WTC11 (cell line): ENCODE measurements at regions of chr5 and their contacts with region 1.

Region 1: DNA sequence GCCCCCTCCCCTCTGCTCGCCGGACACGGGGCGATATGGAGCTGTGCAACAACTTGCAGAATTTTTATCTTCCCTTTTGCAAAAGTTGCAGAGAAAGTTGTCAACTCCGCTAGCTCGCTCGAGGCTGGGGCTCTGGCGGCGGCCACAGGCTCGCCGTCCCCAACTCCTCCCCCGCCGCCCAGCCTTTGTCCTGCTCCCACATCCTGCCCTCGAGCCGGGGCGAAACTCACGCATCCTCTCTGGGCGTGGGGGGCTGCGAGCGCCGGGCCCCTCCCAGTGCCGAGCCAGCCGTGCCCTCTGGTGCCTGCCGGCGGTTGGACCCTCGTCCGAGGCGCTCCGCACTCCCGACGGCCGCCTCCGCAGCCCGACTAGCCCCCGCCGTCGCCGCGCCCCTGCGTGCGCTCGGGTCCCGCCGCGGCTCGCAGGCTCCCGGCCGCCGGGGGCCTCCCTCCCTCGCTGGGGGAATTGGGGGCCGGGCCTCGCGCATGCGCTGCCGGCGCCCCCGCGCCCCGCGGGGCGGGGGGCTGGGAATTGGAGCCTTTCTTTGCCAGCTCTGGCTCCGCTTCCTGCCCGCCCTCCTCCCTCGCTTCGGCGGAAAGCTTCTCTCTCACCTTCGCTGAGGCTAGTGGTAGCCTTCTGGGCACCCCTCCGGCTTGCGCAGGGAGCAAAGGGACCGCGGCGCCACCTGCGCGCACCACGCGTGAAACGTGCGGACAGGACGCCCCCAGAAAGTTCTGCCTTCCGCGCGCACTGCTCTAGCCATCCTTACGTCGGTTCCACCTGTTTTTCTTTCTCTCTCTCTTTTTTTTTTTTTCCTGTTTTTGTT is at the start of gene CCNJL:
- DNase-seq: peak; percentile 88
- ATAC-seq: peak; percentile 82
- H3K4me3 Mint-ChIP-seq: peak within 1 kb of the TSS; percentile 90
- H3K27ac Mint-ChIP-seq: peak within 1 kb of the TSS; percentile 85
- H3K4me1 Mint-ChIP-seq: peaks cover 47% of the 10 kb centered on the region
- H3K27me3 Mint-ChIP-seq: no peaks in the 10 kb centered on the region; the same call in 1 of the 2 replicates
- CTCF ChIP-seq: no peak
- total RNA-seq, gene CCNJL: 27.9 to 31.3 TPM (median 28.6 TPM) in 3 replicates

Region 2: DNA sequence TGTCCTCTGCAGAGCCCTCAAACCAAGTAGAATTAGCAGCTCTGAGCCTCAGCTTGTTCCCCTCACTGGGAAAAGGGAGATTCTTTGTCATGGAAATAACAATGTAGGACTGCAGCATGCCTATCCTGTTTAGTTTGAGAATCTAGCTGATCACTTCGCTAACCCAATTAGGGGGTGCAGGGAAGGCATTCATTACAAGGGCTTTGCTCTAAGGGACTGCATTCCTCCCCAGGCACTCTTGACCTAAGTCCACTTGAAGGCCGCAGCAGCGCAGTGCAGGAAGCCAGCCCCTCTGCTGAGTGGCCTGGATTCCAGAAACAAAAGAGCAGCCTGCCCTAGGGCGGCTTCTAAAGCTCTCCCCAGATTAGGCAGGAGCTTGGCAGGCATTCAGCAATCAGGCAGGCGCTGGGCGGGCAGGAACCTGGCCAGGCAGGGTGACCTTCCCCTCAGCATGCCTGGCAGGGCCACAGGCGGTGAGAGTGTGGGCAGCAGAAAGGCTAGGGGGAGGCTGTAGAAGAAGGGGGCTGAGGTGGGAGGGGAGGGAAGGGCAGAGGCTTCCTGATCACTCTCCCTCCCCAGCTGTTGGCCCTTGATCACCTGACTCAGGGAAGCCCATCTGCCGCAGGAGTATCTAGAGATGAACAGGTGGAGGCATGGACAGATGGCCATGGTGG is 24.8 kb before region 1 on chr5:
- CTCF ChIA-PET with region 1: interaction called, 9 read pairs
- POLR2A ChIA-PET with region 1: interaction called, 18 read pairs
- DNase-seq: peak; percentile 86
- ATAC-seq: peak; percentile 92
- H3K4me3 Mint-ChIP-seq: peak overlapping the region; percentile 60
- H3K27ac Mint-ChIP-seq: peak overlapping the region; percentile 99
- H3K4me1 Mint-ChIP-seq: peaks cover 59% of the 10 kb centered on the region
- H3K27me3 Mint-ChIP-seq: no peaks in the 10 kb centered on the region
- CTCF ChIP-seq: no peak

Region 3: DNA sequence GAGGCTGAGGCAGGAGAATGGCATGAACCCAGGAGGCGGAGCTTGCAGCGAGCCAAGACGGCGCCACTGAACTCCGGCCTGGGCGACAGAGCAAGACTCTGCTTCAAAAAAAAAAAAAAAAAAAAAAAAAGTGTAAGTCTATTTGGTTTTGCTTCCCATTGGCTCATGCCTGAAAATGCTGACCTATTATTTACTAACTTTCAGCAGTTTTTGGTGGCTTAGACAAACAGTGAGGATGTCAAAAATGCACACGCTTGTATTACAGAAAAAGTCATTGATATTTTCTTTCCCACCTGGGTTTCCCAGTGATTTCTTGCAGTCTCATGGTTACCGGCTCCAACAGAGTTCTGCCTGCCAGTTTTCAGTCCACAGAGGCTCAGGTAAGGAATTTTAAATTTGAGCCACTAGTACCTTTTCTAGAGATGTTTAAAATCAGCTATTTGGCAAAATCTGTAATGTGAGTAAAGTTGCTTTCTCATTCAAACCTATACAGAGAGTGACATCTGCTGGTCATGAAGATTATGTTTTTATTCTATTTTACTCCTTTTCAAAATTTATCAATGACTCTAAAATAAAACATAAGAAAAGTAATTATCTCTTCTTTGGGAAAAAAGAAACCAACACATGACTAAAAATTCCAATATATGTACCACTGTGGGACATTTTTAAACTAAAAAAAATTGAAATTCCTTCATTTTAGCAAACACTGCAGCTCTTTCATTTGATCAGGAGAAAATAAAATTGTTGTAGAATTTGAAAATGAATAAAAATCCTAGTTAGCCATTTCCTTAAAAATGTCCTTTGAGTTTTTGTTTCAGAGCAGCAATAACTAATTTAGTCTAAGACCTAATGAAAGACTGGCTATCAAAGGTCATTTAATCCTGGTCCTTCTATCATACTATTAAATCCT is 78.7 kb after region 1 on chr5:
- CTCF ChIA-PET with region 1: no interaction called
- POLR2A ChIA-PET with region 1: no interaction called
- DNase-seq: no peak
- ATAC-seq: no peak
- H3K4me3 Mint-ChIP-seq: no peak overlapping the region
- H3K27ac Mint-ChIP-seq: 0 out of 2 replicates have a peak overlapping the region, but pooled peaks have one; percentile 36
- H3K4me1 Mint-ChIP-seq: no peaks in the 10 kb centered on the region
- H3K27me3 Mint-ChIP-seq: peaks cover 9% of the 10 kb centered on the region
- CTCF ChIP-seq: no peak